ENCODE measurements at regions of chr12 and their contacts with region 1.

Region 1: DNA sequence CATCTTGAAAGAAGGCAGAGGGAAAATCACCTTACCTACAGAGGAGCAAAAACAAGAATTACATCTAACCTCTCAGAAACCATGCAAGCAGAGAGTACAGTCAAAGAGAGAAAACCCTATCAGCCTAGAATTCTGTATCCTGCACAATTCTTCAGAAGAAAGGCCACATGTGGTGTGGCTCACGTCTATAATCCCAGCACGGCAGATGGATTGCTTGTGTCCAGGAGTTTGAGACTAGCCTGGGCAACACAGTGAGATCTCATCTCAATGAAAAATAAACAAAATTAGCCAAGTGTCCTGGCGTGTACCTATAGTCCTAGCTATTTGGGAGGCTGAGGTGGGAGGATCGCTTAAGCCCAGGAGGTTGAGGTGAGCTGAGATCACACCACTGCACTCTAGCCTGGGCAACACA is 48.2 kb downstream of the ATF7 start:
- DNase-seq: no peak
- H3K4me3 ChIP-seq: no peak overlapping the region
- H3K27ac ChIP-seq: no peak overlapping the region
- H3K4me1 ChIP-seq: peaks cover 16% of the 10 kb centered on the region
- H3K27me3 ChIP-seq: no peaks in the 10 kb centered on the region
- CTCF ChIP-seq: no peak

Region 2: DNA sequence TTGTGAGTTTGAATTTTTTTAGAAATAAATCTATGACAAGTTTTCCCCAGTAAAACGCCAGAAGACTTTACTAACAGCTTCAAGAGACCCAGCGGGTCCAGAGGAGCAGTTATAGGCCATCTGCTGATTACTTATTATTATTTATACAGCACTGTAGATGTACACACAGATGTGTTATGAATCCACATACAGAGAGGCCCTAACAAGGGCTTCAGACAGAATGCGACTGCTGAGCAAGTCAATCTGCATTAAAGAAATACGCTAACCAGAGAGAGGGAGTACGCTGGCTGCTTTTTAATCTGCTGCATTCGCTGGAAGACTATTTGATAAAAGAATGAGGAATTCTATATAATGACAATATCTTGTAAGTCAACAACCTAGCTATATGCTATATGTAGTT is 15.8 kb after region 1 on chr12:
- CTCF ChIA-PET with region 1: interaction called, 12 read pairs
- POLR2A ChIA-PET with region 1: no interaction called
- intact Hi-C with region 1: no loop called
- DNase-seq: no peak
- H3K4me3 ChIP-seq: no peak overlapping the region
- H3K27ac ChIP-seq: no peak overlapping the region
- H3K4me1 ChIP-seq: no peaks in the 10 kb centered on the region
- H3K27me3 ChIP-seq: no peaks in the 10 kb centered on the region
- CTCF ChIP-seq: no peak

Region 3: DNA sequence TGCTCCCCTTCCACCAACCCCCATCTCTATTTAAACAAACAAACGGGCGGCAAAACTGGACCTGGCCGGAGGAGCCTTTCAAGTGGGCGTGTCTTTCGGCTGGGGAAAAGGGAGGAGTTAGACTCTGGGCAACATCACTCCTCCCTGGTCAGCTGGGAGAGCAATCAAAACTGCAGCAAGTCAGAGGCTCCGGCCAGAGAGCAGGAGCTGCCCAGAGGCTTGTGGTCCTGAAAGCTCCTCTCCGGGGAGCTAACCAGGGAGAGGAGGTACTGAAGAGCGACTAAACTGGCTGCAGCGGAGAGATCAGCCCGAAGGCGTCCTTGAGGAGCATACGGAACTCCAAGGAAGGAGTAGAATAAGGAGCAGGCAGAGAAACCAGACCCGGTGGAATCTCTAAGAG is 1441.8 kb after region 1 on chr12 and contains the start of gene NEUROD4:
- CTCF ChIA-PET with region 1: no interaction called
- POLR2A ChIA-PET with region 1: no interaction called
- intact Hi-C with region 1: no loop called
- DNase-seq: peak in 1 of 2 experiments; percentile 1
- H3K4me3 ChIP-seq: no peak within 1 kb of the TSS
- H3K27ac ChIP-seq: no peak within 1 kb of the TSS
- H3K4me1 ChIP-seq: no peaks in the 10 kb centered on the region
- H3K27me3 ChIP-seq: peaks cover 23% of the 10 kb centered on the region
- CTCF ChIP-seq: no peak
- total RNA-seq, gene NEUROD4: not detected in 2 replicates